ENCODE measurements at regions of chr12 and their contacts with region 1.

Region 1: DNA sequence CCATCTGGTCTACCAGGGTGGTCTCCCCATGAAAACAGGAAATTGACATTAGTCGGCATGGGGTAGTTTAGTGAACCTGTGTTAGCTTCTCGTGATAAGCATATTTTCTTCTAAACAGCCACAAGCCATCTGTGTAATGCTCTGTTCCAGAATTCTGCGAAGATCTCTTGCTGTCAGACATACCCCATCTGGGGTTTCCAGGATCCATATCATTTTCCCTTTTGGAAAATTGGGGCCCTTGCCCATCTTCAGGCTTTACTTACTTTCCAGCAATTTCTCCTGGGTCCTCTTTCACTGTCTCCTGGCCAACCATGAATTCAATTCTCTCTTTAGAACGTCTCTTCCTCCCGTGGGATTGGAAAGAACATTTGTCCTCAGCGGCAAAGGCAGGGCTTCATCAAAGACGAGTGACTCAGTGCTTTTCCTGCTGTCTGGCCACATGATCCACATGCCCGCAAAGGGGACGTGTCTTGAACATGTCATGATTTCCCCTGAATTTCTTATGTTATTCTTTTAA is 21.4 kb upstream of the NCOR2 start:
- DNase-seq: peak; percentile 72 to 83 (median 76)
- ATAC-seq: peak; percentile 80 to 86 (median 85)
- H3K4me3 ChIP-seq: no peak overlapping the region
- H3K27ac ChIP-seq: peak overlapping the region; percentile 2 to 78 (median 52)
- H3K4me1 ChIP-seq: peaks cover 0 to 57% (median 12%) of the 10 kb centered on the region in 12 donors
- H3K27me3 ChIP-seq: no peaks in the 10 kb centered on the region
- CTCF ChIP-seq: no peak
- POLR2A ChIP-seq: no peak

Region 2: DNA sequence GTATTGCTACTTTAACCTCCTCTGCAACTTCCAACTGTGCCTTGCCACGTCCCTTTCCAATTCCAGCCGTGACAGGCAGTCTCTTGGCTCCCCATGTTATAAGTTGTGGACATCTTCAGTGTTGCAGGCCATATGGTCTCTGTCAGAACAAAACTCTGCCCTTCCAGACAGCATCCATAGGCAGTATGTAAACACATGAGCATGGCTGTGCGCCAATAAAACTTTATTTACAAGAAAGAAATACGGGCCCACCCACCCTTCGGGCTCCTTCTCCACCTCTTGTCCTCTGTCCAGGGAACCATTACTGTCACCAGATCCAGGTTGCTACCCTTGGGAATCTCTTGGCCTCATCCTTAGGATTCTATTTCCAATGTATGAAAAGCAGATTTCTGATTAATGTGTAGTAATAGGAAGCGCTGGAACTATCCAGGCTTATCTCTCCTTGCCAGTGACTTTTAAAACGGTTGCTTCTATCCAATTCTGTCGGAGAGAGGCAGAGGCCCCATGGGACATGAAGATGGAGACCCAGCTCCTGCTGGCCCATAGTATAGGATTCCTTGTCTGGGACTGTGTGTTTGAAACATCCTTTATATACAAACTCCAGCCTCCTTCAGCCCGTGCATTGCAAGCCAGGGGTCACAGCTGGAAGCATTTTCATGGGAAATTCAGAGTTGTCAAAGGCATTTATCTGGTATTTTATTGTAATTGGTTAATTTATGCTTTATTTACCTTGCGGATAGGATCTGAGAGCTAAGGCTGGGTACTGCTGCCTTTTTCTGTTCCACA is 501.4 kb before region 1 on chr12:
- intact Hi-C with region 1: no loop called
- DNase-seq: no peak
- ATAC-seq: no peak
- H3K4me3 ChIP-seq: no peak overlapping the region
- H3K27ac ChIP-seq: no peak overlapping the region
- H3K4me1 ChIP-seq: no peaks in the 10 kb centered on the region
- H3K27me3 ChIP-seq: no peaks in the 10 kb centered on the region
- CTCF ChIP-seq: no peak
- POLR2A ChIP-seq: no peak

Region 3: GRCh38 chr12:124512667-124513296 is 76.0 kb before region 1 on chr12:
- intact Hi-C with region 1: no loop called
- DNase-seq: peak; percentile 85 to 94 (median 90)
- ATAC-seq: peak in 3 of 4 donors; percentile 13 to 53 (median 43)
- H3K4me3 ChIP-seq: no peak overlapping the region
- H3K27ac ChIP-seq: peak overlapping the region; percentile 19 to 83 (median 68)
- H3K4me1 ChIP-seq: peaks cover 14 to 99% (median 87%) of the 10 kb centered on the region in 12 donors
- H3K27me3 ChIP-seq: no peaks in the 10 kb centered on the region
- CTCF ChIP-seq: no peak
- POLR2A ChIP-seq: no peak

Region 4: DNA sequence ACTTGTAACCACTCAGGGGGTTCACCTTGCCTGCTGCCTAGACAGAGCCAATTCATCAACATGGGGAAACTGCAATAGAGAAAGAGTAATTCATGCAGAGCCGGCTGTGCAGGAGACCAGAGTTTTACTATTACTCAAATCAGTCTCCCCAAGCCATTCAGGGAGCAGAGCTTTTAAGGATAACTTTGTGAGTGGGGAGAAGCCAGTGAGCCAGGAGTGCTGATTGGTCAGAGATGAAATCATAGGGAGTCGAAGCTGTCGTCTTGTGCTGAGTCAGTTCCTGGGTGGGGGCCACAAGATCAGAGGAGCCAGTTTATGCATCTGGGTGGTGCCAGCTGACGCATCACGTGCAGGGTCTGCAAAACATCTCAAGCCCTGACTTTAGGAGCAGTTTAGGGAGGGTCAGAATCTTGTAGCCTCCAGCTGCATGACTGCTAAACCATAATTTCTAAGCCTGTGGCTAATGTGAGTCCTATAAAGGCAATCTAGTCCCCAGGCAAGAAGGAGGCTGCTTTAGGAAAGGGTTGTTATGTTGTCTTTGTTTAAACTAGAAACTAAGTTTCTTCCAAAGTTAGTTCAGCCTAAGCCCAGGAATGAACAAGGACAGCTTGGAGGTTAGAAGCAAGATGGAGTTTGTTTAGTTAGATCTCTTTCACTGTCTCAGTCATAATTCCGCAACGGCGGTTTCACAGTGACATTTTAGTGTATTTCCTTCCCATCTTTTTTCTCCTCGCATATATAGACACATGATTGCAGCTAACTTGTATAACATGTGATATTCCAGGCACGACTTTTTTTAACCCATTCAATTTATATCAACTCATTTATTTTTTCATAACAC is 47.5 kb after region 1 on chr12:
- intact Hi-C with region 1: no loop called
- DNase-seq: peak in 2 of 5 donors; percentile 58 to 74
- ATAC-seq: no peak
- H3K4me3 ChIP-seq: no peak overlapping the region
- H3K27ac ChIP-seq: peak overlapping the region in 2 of 12 donors; percentile 17 to 59
- H3K4me1 ChIP-seq: peaks cover 0 to 47% (median 2%) of the 10 kb centered on the region in 12 donors
- H3K27me3 ChIP-seq: no peaks in the 10 kb centered on the region
- CTCF ChIP-seq: no peak
- POLR2A ChIP-seq: no peak

Region 5: GRCh38 chr12:124655698-124656516 is 67.1 kb after region 1 on chr12:
- intact Hi-C with region 1: loop called in 1 of 10 experiments (anchors 10 kb)
- DNase-seq: peak; percentile 87 to 91 (median 90)
- ATAC-seq: peak; percentile 70 to 81 (median 79)
- H3K4me3 ChIP-seq: peak overlapping the region in 8 of 12 donors; percentile 1 to 42 (median 24)
- H3K27ac ChIP-seq: peak overlapping the region; percentile 43 to 92 (median 84)
- H3K4me1 ChIP-seq: peaks cover 3 to 64% (median 44%) of the 10 kb centered on the region in 12 donors
- H3K27me3 ChIP-seq: no peaks in the 10 kb centered on the region
- CTCF ChIP-seq: no peak
- POLR2A ChIP-seq: no peak

Measured in heart left ventricle (tissue), 16 donors.